SK-MEL-5 (cell line): ENCODE measurements at regions of chr18 and their contacts with region 1.

Region 1: GRCh38 chr18:45059695-45060094 is 379.0 kb downstream of the SETBP1 start:
- DNase-seq: peak; percentile 43

Region 2: GRCh38 chr18:45212181-45213039 is 152.7 kb after region 1 on chr18:
- in situ Hi-C with region 1: loop called (anchors 25 kb)
- DNase-seq: peak; percentile 90